Heart left ventricle (tissue), 16 donors: ENCODE measurements at regions of chr3 and their contacts with region 1.

Region 1: GRCh38 chr3:94069194-94069813 is 6.4 kb downstream of the NSUN3 start:
- DNase-seq: no peak
- ATAC-seq: no peak
- H3K4me3 ChIP-seq: no peak overlapping the region
- H3K27ac ChIP-seq: no peak overlapping the region
- H3K4me1 ChIP-seq: peaks cover 0 to 30% (median 7%) of the 10 kb centered on the region in 12 donors
- H3K27me3 ChIP-seq: no peaks in the 10 kb centered on the region
- CTCF ChIP-seq: peak; percentile 50 to 80 (median 68)
- POLR2A ChIP-seq: no peak

Region 2: DNA sequence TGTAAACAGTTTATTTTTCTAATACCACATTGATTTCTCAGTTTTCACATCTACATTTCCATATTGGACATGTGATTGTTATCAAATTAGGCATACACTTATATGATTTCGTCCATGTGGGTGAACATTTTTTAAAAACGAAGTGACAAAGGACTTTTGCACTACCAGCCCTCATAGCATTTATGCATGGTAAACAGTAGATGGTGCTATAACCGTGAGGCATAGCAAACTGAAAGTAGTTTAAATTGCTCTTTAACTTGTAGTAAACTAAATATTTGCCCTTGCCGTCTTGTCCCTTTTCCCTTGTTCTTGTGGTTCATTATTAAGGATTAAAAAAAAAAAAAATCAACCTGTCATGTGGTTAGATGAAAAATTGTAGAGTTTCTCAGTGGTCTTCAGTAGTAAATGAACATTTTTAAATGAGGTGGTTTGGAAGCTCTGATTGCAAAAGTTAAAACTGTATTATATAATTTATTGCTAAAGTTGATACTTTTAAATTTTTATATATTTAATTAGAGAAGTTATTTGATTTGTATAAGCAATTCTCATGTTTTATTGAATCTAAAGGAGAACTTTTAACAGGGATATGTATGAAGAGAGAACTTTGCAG is 64.9 kb before region 1 on chr3:
- intact Hi-C with region 1: loop called (anchors 2 to 5 kb)
- DNase-seq: no peak
- ATAC-seq: peak; percentile 36 to 81 (median 74)
- H3K4me3 ChIP-seq: peak overlapping the region in 10 of 12 donors; percentile 25 to 44 (median 36)
- H3K27ac ChIP-seq: peak overlapping the region in 2 of 12 donors; percentile 31 to 41
- H3K4me1 ChIP-seq: peaks cover 0 to 14% (median 1%) of the 10 kb centered on the region in 12 donors
- H3K27me3 ChIP-seq: no peaks in the 10 kb centered on the region
- CTCF ChIP-seq: peak; percentile 61 to 89 (median 79)
- POLR2A ChIP-seq: no peak

Region 3: DNA sequence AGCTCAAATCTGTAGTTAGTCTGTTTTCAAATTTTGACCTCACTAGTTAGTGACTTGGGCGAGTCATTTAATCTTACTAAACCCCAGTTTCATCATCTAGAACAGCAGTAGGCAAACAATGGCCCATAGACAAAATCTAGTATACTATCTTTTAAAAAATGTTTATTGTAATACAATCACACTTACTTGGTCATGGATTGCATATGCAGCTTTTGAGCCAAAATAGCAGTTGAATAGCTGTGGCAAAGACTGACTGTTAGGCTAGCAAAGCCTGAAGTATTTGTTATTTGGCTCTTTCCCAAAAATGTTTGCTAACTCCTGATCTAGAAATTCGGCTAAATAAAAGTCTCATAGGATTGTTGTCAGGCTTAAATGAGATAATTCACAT is 344.4 kb after region 1 on chr3:
- intact Hi-C with region 1: no loop called
- DNase-seq: no peak
- ATAC-seq: no peak
- H3K4me3 ChIP-seq: no peak overlapping the region
- H3K27ac ChIP-seq: no peak overlapping the region
- H3K4me1 ChIP-seq: no peaks in the 10 kb centered on the region
- H3K27me3 ChIP-seq: no peaks in the 10 kb centered on the region
- CTCF ChIP-seq: no peak
- POLR2A ChIP-seq: no peak

Region 4: DNA sequence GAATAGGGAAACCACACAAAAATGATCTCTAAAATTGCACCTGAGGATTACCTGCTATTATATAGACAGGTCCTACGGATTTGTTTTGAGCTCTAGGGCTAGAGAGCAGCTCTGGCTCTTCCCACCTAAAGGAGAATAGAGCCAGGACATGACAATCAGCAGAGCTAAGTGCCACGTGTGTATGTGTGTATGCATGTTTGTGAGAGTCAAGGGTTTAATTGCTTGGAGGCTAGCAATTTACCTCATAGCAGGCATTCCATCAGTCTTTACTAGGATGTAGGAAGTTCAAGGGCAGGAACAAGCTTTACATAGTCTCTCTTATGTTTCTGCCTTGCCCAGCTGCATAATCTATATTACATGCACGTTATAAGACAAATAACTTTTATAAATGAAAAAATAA is 491.8 kb after region 1 on chr3:
- intact Hi-C with region 1: no loop called
- DNase-seq: no peak
- ATAC-seq: no peak
- H3K4me3 ChIP-seq: no peak overlapping the region
- H3K27ac ChIP-seq: no peak overlapping the region
- H3K4me1 ChIP-seq: no peaks in the 10 kb centered on the region
- H3K27me3 ChIP-seq: no peaks in the 10 kb centered on the region
- CTCF ChIP-seq: no peak
- POLR2A ChIP-seq: no peak